Uterus (tissue), 4 donors: ENCODE measurements at regions of chr1 and their contacts with region 1.

Region 1: DNA sequence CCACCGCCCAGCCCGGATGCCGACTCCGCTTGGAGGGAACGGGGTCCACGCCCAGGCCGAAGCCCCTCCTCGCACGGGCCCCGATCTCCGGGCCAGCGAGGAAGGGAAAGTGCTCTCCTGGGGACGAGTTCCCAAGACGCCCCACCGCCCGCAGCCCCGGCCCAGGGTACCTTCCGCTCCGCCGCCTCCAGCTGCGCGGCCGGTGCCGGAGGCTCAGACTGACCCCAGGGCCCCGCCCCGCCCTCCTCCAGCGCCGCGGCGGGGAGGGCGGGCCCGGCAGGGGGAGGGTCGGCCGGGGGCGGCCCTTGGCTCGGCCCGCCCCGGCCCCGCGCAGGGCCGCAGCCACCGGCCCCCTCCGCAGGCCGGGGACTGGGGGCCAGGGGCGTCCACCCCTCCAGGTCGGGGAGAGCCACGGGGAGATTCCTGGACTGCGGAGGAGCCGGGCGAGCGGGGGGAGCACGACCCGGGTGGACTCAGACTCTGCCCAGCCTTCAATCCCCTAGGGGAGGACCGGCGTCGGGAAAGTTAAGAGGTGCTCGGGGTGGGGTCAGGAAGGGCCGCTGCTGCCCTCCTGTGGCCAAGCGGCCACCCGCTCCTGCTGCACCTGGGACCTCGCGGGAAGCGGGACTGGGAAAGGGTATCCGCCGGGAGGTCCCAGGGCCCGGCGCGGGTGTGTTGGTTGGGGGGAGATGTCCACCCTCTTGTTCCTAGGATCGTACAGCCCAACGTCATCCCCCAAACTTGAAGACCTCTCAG is at the start of gene RHOC:
- DNase-seq: peak; percentile 90 to 92
- H3K4me3 ChIP-seq: peak within 1 kb of the TSS; percentile 78 to 99
- H3K27ac ChIP-seq: peak within 1 kb of the TSS; percentile 97
- H3K4me1 ChIP-seq: peaks cover 6 to 11% of the 10 kb centered on the region in 2 donors
- H3K27me3 ChIP-seq: no peaks in the 10 kb centered on the region
- CTCF ChIP-seq: peak; percentile 92 to 97 (median 96)
- POLR2A ChIP-seq: peak; percentile 83 to 95
- total RNA-seq, gene RHOC: 176 to 314 (median 279) TPM

Region 2: DNA sequence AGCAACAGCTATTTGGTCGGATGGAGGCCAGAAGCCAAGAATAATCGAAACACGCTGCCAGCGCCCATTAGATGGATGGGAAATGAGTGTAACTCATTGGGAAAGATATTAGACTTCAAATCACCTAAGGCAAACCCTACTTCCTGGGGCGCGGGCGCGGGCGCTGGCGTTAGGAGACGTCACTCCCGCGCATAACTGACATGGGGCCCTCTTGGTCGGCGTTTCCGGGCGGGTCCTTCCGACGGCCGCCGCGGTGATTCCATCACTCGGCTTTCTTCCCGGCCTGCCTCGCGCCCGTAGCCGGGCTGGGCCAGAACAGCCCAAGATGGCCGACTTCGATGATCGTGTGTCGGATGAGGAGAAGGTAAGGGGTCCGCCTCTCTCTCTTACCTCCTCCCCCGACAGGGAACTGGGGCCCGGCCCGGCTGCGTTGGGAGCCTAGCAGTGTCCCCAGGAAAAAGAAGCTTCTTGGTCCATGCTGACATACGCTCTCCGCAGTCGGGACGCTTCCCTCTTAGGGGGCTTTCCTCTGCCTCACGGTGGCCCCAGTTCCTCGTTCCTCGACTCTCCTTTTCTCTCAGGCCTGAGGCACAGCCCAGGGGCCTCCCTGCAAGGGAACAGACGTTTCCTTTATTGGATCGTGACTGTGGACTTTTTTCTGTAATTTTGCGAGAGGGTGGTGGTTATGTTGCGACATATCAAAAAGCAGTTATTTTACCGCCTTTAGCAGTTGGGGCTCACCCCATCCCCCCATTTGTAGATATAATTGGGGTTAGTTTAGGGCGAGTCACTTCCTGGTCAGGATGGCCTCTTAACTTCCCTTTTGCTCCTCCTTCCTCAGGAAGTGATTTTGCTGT is 87.3 kb before region 1 on chr1 and contains the start of gene CAPZA1:
- intact Hi-C with region 1: loop called (anchors 10 kb)
- DNase-seq: peak; percentile 88 to 91
- H3K4me3 ChIP-seq: peak within 1 kb of the TSS; percentile 93 to 95
- H3K27ac ChIP-seq: peak within 1 kb of the TSS; percentile 96 to 98
- H3K4me1 ChIP-seq: peaks cover 0 to 10% of the 10 kb centered on the region in 2 donors
- H3K27me3 ChIP-seq: no peaks in the 10 kb centered on the region
- CTCF ChIP-seq: no peak
- POLR2A ChIP-seq: peak; percentile 64 to 75
- total RNA-seq, gene CAPZA1: 60.6 to 503 (median 151) TPM

Region 3: DNA sequence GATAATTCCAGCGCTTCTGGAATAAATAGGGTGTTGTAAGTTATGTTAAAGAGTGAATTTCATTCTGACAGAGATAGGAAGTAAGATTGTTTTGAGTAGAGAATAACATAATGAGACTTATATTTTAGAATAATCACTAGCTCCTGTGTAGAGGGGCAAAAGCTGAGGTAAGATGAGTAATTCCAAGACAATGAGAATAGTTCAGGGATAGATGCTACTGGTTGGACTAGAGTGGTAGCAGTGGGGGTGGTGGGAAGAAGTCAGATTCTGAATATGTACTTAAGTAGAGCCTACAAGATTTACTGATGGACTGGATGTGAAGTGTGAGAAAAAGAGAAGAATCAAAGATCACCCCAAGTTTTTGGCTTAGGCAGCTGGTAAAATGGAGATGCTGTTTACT is 55.9 kb before region 1 on chr1:
- intact Hi-C with region 1: no loop called
- DNase-seq: no peak
- H3K4me3 ChIP-seq: no peak overlapping the region
- H3K27ac ChIP-seq: no peak overlapping the region
- H3K4me1 ChIP-seq: no peaks in the 10 kb centered on the region
- H3K27me3 ChIP-seq: no peaks in the 10 kb centered on the region
- CTCF ChIP-seq: no peak
- POLR2A ChIP-seq: no peak